Mammary epithelial cell (primary cell): ENCODE measurements at regions of chr11 and their contacts with region 1.

Region 1: DNA sequence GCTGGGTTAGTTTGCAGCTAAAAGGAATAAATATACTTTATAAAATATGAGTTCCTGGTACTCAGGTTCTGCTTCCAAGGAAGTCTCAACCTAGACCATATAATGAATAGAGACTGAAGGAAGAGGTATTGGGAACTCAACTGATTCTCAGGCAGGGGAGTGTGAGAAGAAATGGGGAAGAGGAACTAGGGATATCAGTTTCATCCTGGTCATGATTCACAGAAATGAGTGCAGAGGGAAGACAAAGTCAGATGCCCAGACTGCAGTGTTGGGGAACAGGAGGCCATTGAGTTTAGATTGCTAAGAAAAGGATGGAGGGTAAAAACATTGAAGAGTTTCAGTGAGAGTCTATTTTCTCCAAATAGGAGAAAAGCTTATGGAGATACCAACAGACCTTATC is 28.8 kb downstream of the PLAAT5 start:
- DNase-seq: no peak
- H3K4me3 ChIP-seq: no peak overlapping the region
- H3K27ac ChIP-seq: no peak overlapping the region
- H3K4me1 ChIP-seq: no peaks in the 10 kb centered on the region
- H3K27me3 ChIP-seq: peaks cover 4% of the 10 kb centered on the region
- CTCF ChIP-seq: no peak

Region 2: GRCh38 chr11:63427971-63428508 is 34.1 kb before region 1 on chr11:
- CTCF ChIA-PET with region 1: no interaction called
- dilution Hi-C with region 1: no loop called
- in situ Hi-C with region 1: no loop called
- intact Hi-C with region 1: no loop called
- DNase-seq: no peak
- H3K4me3 ChIP-seq: no peak overlapping the region
- H3K27ac ChIP-seq: no peak overlapping the region
- H3K4me1 ChIP-seq: no peaks in the 10 kb centered on the region
- H3K27me3 ChIP-seq: no peaks in the 10 kb centered on the region
- CTCF ChIP-seq: no peak

Region 3: GRCh38 chr11:63445720-63446119 is 16.4 kb before region 1 on chr11:
- CTCF ChIA-PET with region 1: no interaction called
- dilution Hi-C with region 1: no loop called
- in situ Hi-C with region 1: no loop called
- intact Hi-C with region 1: no loop called
- DNase-seq: peak; percentile 63
- H3K4me3 ChIP-seq: no peak overlapping the region
- H3K27ac ChIP-seq: no peak overlapping the region
- H3K4me1 ChIP-seq: peaks cover 3% of the 10 kb centered on the region
- H3K27me3 ChIP-seq: no peaks in the 10 kb centered on the region
- CTCF ChIP-seq: no peak

Region 4: GRCh38 chr11:63641727-63642126 is 179.6 kb after region 1 on chr11:
- CTCF ChIA-PET with region 1: no interaction called
- dilution Hi-C with region 1: loop called (anchors 10 kb)
- in situ Hi-C with region 1: no loop called
- intact Hi-C with region 1: no loop called
- DNase-seq: no peak
- H3K4me3 ChIP-seq: no peak overlapping the region
- H3K27ac ChIP-seq: no peak overlapping the region
- H3K4me1 ChIP-seq: no peaks in the 10 kb centered on the region
- H3K27me3 ChIP-seq: no peaks in the 10 kb centered on the region
- CTCF ChIP-seq: peak in 1 of 2 donors; percentile 38